ENCODE measurements at regions of chrX and their contacts with region 1.

Region 1: DNA sequence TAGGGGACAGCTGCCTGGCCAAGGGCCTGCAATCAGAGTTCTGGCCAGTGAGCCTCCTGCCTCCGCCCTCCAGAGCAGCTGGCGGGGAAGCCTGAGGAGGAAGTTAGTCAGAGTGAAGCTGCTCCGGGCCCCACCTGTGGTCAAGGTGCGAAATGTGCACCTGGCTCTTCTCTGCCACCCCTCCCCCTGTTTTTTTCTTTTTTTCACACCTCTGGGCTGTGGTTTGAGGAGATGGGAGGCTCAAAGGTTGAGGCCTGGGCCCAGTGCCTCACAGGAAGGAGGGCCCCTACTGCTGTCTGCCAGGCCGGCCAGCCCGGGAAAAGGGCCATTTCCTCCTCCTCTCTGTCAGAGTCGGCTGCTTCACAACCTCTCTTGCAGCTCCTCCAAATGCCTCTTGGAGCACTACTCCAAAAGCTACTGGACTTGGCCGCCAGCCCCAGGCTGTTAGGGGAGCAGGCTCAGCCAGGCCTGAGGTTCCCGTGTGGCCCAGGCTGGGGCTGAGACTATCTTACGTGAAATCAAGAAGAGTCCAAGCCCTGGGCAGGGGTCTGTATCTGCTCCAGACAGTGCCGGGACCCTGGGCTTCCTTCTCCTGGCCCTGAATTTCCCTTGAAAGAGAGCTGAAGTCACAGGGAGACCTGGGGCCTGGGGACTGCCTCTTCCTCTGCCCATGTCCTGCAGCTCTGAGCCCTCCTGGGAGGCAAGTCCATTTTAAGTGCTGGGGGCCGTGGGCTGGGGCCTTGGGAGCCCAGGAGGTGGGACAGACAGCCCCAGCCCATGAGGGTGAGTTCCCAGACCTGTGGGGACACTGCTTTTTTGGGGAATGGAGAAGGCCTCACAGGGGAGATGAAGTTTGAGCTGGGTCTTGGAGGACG is 4.5 kb upstream of the CXCR3 start:
- DNase-seq: peak; percentile 65
- H3K4me3 Mint-ChIP-seq: peak overlapping the region; percentile 70
- H3K27ac Mint-ChIP-seq: peak overlapping the region; percentile 97
- H3K4me1 Mint-ChIP-seq: peaks cover 60% of the 10 kb centered on the region
- H3K27me3 Mint-ChIP-seq: no peaks in the 10 kb centered on the region

Region 2: GRCh38 chrX:71118032-71118984 is 504.5 kb before region 1 on chrX and contains the start of gene MED12:
- intact Hi-C with region 1: loop called (anchors 10 kb)
- DNase-seq: peak; percentile 76
- H3K4me3 Mint-ChIP-seq: peak within 1 kb of the TSS; percentile 85
- H3K27ac Mint-ChIP-seq: peak within 1 kb of the TSS; percentile 82
- H3K4me1 Mint-ChIP-seq: peaks cover 20% of the 10 kb centered on the region
- H3K27me3 Mint-ChIP-seq: no peaks in the 10 kb centered on the region
- total RNA-seq, gene MED12: 59.9 and 65.4 TPM in 2 replicates

Region 3: DNA sequence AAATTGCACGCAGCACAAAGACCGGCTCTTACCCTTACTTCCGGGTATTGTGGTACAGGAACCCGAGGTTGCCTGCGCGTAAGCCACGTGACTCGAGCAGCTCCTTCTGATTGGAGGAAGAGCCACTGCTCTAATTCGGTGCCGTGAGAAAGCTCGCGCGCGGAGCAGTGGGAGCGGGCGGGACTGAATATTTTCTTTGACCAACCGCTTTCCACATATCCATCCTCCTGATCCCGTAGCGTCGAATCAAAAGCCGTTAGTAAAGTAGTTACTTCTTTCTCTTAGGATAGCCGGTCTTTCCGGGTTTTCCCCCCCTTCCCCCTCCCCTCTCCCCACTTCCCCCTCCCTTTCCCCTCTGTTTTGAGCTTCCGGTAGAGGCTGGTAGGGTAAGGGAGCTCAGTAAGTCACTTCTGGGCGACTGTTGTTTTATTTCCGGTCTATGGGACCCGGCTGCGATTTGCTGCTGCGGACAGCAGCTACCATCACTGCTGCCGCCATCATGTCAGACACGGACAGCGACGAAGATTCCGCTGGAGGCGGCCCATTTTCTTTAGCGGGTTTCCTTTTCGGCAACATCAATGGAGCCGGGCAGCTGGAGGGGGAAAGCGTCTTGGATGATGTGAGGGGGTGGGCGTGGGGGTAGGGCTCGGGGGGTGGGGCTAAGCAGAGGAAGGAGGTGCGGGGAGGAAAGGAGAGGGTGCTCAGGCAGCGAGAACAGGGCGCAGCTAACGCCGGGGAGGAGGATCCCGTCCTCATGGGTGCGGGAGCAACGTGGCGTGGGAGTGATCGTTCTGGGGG is 256.7 kb before region 1 on chrX and contains the start of gene TAF1:
- intact Hi-C with region 1: loop called (anchors 2 kb)
- DNase-seq: peak; percentile 88
- H3K4me3 Mint-ChIP-seq: peak within 1 kb of the TSS; percentile 97
- H3K27ac Mint-ChIP-seq: peak within 1 kb of the TSS; percentile 99
- H3K4me1 Mint-ChIP-seq: peaks cover 21% of the 10 kb centered on the region
- H3K27me3 Mint-ChIP-seq: no peaks in the 10 kb centered on the region
- total RNA-seq, gene TAF1: 41.4 and 46.1 TPM in 2 replicates

Region 4: DNA sequence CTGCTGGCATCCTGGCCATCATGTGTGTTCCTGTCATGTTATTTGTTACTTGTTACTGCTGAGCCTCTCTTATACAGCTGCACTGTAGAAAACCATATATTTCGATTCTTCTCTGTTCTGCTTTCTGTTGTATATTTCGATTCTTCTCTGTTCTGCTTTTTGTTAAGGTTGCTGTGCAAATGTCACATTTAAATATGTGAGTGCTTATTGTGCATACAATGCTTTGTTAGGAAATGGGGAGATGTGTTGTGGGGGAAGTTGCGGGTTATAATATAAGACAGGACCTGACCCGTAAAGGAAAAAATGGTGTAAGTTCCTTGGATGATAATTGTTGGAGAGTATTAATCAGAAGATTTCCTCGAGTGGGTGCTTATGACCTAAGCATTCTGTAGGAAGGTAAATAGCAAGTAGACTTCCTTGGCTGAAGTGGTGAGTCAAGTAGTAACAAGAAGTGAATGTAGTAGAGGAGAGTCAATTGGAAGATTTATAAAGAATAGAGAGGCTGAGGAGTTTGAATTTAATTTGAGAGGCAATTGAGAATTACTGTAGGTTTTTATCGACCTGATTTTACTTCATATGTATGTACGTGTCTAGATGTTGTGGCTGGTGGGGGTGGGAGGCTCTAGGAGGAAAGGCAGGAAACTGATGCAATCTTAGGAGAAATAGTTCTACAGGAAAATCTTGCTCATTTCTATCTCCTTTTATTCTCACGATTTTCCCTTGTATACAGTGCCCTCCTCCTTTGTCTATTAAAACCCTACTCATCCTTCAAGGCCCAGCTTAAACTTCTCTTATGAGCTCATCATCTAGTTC is 81.4 kb before region 1 on chrX:
- intact Hi-C with region 1: loop called (anchors 1 kb)
- DNase-seq: no peak
- H3K4me3 Mint-ChIP-seq: peak overlapping the region; percentile 95
- H3K27ac Mint-ChIP-seq: peak overlapping the region; percentile 94
- H3K4me1 Mint-ChIP-seq: peaks cover 61% of the 10 kb centered on the region
- H3K27me3 Mint-ChIP-seq: no peaks in the 10 kb centered on the region

Region 5: GRCh38 chrX:71637848-71638247 is 15.0 kb after region 1 on chrX:
- intact Hi-C with region 1: loop called (anchors 1 kb)
- DNase-seq: no peak
- H3K4me3 Mint-ChIP-seq: no peak overlapping the region
- H3K27ac Mint-ChIP-seq: no peak overlapping the region
- H3K4me1 Mint-ChIP-seq: peaks cover 5% of the 10 kb centered on the region
- H3K27me3 Mint-ChIP-seq: no peaks in the 10 kb centered on the region

Region 6: DNA sequence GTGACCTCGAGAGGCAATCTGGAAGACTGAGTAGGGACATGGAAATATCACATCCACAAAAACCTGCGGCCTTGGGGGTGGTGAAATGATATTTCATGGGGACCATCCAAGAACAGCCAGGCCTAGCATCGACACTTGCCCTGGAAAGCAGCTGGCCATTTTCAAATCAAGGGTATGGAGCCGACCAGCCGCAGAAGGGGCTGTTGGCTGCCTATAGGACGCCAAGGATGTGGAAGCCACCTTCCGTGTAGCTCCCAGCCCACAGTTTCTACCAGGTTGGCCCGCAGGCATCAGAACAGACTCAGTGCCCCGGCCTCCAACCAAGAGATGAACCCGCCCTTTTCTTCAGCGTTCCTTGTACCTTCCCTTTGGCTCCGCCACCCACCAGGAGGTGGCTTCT is 39.1 kb after region 1 on chrX:
- intact Hi-C with region 1: loop called (anchors 2 kb)
- DNase-seq: no peak
- H3K4me3 Mint-ChIP-seq: no peak overlapping the region
- H3K27ac Mint-ChIP-seq: no peak overlapping the region
- H3K4me1 Mint-ChIP-seq: peaks cover 27% of the 10 kb centered on the region
- H3K27me3 Mint-ChIP-seq: peaks cover 4% of the 10 kb centered on the region